MCF 10A (cell line): ENCODE measurements at regions of chr20 and their contacts with region 1.

Region 1: DNA sequence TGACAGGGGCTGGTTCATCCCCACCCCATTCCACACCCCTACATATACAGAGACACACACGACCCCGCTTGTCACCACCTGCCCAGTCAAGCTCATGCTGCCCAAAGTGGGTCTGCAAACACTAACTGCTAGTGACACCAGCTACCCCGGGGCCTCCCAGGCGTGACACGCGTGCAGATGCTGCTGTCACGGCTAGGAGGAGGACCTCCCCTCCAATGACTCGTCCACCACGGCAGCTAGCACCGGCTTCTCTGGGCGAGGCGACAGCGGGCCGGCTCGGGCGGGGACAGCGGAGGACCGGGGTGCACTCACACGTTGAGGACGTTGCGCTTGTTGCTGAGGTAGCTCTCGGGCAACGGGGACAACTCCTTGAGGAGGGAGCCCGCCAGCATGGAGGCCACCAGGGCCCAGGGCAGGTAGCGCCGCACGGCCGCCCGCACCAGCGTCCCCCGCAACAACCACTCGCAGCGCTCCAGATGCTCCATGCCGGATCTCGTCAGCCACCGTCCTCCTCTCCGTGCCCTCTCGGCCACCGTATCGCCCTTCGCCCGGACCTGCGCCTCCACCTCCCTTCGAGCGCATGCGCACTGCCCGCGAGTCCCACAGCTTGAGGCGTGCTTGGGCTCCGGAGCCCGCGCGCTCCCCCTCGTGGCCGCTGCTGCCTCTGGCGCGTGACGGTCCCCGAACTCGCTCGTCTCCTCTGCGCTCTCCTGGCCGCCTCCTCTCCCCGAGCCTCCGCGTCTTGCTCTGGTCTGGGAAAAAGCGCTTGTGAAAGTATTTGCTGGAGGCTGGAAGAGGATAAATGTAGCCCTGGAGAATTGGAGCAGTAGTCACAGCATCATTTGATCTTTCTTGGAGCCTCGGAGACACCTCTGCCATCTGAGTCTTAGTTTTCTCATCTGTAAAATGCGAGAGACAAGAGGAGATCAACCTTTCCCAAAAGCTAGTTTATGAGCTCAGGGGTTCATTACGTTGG is at the start of gene FITM2:
- DNase-seq: peak; percentile 97
- H3K4me3 Mint-ChIP-seq: peak within 1 kb of the TSS; percentile 96
- H3K27ac Mint-ChIP-seq: peak within 1 kb of the TSS; percentile 86
- H3K4me1 Mint-ChIP-seq: peaks cover 11% of the 10 kb centered on the region
- H3K27me3 Mint-ChIP-seq: no peaks in the 10 kb centered on the region
- CTCF ChIP-seq: peak; percentile 90
- total RNA-seq, gene FITM2: 7.2 and 8.1 TPM in 2 replicates

Region 2: GRCh38 chr20:44115762-44116644 is 194.9 kb before region 1 on chr20:
- CTCF ChIA-PET with region 1: interaction called, 12 read pairs
- POLR2A ChIA-PET with region 1: no interaction called
- intact Hi-C with region 1: loop called (anchors 2 kb)
- DNase-seq: no peak
- H3K4me3 Mint-ChIP-seq: no peak overlapping the region
- H3K27ac Mint-ChIP-seq: no peak overlapping the region
- H3K4me1 Mint-ChIP-seq: peaks cover 6% of the 10 kb centered on the region
- H3K27me3 Mint-ChIP-seq: no peaks in the 10 kb centered on the region
- CTCF ChIP-seq: no peak

Region 3: GRCh38 chr20:44210422-44211176 is 100.4 kb before region 1 on chr20 and contains the start of gene OSER1:
- CTCF ChIA-PET with region 1: interaction called, 536 read pairs
- POLR2A ChIA-PET with region 1: interaction called, 63 read pairs
- intact Hi-C with region 1: no loop called
- DNase-seq: peak; percentile 99
- H3K4me3 Mint-ChIP-seq: peak within 1 kb of the TSS; percentile 100
- H3K27ac Mint-ChIP-seq: peak within 1 kb of the TSS; percentile 100
- H3K4me1 Mint-ChIP-seq: peaks cover 39% of the 10 kb centered on the region
- H3K27me3 Mint-ChIP-seq: no peaks in the 10 kb centered on the region
- CTCF ChIP-seq: no peak
- total RNA-seq, gene OSER1: 45.4 and 50.8 TPM in 2 replicates

Region 4: GRCh38 chr20:44247586-44248409 is 63.2 kb before region 1 on chr20:
- CTCF ChIA-PET with region 1: interaction called, 20 read pairs
- POLR2A ChIA-PET with region 1: no interaction called
- intact Hi-C with region 1: no loop called
- DNase-seq: peak; percentile 39
- H3K4me3 Mint-ChIP-seq: no peak overlapping the region
- H3K27ac Mint-ChIP-seq: no peak overlapping the region
- H3K4me1 Mint-ChIP-seq: no peaks in the 10 kb centered on the region
- H3K27me3 Mint-ChIP-seq: peaks cover 29% of the 10 kb centered on the region
- CTCF ChIP-seq: no peak

Region 5: GRCh38 chr20:44284032-44284431 is 26.9 kb before region 1 on chr20:
- CTCF ChIA-PET with region 1: interaction called, 12 read pairs
- POLR2A ChIA-PET with region 1: interaction called, 6 read pairs
- intact Hi-C with region 1: no loop called
- DNase-seq: no peak
- H3K4me3 Mint-ChIP-seq: no peak overlapping the region
- H3K27ac Mint-ChIP-seq: no peak overlapping the region
- H3K4me1 Mint-ChIP-seq: peaks cover 6% of the 10 kb centered on the region
- H3K27me3 Mint-ChIP-seq: no peaks in the 10 kb centered on the region
- CTCF ChIP-seq: no peak

Region 6: GRCh38 chr20:44370639-44371220 is 59.8 kb after region 1 on chr20:
- CTCF ChIA-PET with region 1: interaction called, 14 read pairs
- POLR2A ChIA-PET with region 1: no interaction called
- intact Hi-C with region 1: no loop called
- DNase-seq: no peak
- H3K4me3 Mint-ChIP-seq: no peak overlapping the region
- H3K27ac Mint-ChIP-seq: no peak overlapping the region
- H3K4me1 Mint-ChIP-seq: no peaks in the 10 kb centered on the region
- H3K27me3 Mint-ChIP-seq: peaks cover 12% of the 10 kb centered on the region
- CTCF ChIP-seq: no peak

Region 7: DNA sequence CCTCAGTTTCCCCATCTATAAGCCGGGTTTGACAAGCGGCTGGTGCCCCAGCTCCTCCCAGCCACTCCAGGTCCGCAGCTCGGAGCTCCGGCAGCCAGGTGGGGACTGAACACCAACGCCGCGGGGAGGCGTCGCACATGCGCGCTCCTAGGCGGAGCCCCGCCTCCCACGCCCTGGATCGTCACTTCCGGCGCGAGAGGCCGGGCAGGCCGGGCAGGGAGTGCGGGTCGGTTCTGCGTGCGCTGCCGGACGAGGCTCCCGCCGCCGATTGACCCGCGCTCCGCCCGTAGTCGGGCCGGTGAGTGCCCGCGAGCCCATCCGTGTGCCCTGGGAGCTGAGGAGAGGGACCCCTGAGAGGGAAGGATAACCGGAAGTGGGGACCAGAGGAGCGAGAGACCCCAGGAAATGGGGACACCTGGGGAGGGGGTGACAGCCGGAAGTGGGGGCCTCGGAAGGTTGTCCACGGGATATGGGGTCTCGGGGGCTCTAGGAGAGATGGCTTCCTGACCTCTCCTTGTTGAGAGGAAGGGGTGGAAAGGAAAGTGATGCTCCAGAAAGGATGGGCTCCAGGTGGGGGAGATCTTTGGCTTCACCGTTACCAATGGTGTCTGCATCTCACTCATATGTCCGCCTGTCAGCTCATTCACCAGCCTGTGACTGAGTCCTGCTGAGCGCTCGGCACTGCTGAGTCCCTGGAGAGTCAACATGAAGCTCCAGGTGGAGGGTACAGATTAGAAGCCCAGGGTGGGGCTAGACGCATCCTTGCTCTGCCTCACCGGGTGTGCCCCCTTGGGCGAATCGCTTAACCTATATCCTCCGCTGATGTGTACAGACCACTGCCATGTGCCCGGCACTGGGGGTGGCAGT is 165.0 kb after region 1 on chr20 and contains the start of gene TTPAL:
- CTCF ChIA-PET with region 1: interaction called, 44 read pairs
- POLR2A ChIA-PET with region 1: interaction called, 7 read pairs
- intact Hi-C with region 1: loop called (anchors 5 kb)
- DNase-seq: peak; percentile 89
- H3K4me3 Mint-ChIP-seq: peak within 1 kb of the TSS; percentile 98
- H3K27ac Mint-ChIP-seq: peak within 1 kb of the TSS; percentile 98
- H3K4me1 Mint-ChIP-seq: peaks cover 23% of the 10 kb centered on the region
- H3K27me3 Mint-ChIP-seq: no peaks in the 10 kb centered on the region
- CTCF ChIP-seq: no peak
- total RNA-seq, gene TTPAL: 34.1 and 35.4 TPM in 2 replicates